WTC11 (cell line): ENCODE measurements at regions of chr19 and their contacts with region 1.

Region 1: GRCh38 chr19:41426952-41427646 is at the start of gene B3GNT8:
- DNase-seq: peak; percentile 89
- ATAC-seq: peak; percentile 89
- H3K4me3 Mint-ChIP-seq: peak within 1 kb of the TSS; percentile 84
- H3K27ac Mint-ChIP-seq: peak within 1 kb of the TSS; percentile 95
- H3K4me1 Mint-ChIP-seq: peaks cover 21% of the 10 kb centered on the region
- H3K27me3 Mint-ChIP-seq: no peaks in the 10 kb centered on the region
- CTCF ChIP-seq: no peak
- total RNA-seq, gene B3GNT8: 0.96 to 2.3 TPM (median 1.2 TPM) in 3 replicates

Region 2: GRCh38 chr19:41310033-41310758 is 116.9 kb before region 1 on chr19 and contains the start of gene CCDC97:
- CTCF ChIA-PET with region 1: no interaction called
- POLR2A ChIA-PET with region 1: no interaction called
- DNase-seq: peak; percentile 88
- ATAC-seq: peak; percentile 67
- H3K4me3 Mint-ChIP-seq: peak within 1 kb of the TSS; percentile 96
- H3K27ac Mint-ChIP-seq: peak within 1 kb of the TSS; percentile 98
- H3K4me1 Mint-ChIP-seq: peaks cover 21% of the 10 kb centered on the region
- H3K27me3 Mint-ChIP-seq: no peaks in the 10 kb centered on the region
- CTCF ChIP-seq: no peak
- total RNA-seq, gene CCDC97: 29.7 to 31.4 TPM (median 30.8 TPM) in 3 replicates

Region 3: DNA sequence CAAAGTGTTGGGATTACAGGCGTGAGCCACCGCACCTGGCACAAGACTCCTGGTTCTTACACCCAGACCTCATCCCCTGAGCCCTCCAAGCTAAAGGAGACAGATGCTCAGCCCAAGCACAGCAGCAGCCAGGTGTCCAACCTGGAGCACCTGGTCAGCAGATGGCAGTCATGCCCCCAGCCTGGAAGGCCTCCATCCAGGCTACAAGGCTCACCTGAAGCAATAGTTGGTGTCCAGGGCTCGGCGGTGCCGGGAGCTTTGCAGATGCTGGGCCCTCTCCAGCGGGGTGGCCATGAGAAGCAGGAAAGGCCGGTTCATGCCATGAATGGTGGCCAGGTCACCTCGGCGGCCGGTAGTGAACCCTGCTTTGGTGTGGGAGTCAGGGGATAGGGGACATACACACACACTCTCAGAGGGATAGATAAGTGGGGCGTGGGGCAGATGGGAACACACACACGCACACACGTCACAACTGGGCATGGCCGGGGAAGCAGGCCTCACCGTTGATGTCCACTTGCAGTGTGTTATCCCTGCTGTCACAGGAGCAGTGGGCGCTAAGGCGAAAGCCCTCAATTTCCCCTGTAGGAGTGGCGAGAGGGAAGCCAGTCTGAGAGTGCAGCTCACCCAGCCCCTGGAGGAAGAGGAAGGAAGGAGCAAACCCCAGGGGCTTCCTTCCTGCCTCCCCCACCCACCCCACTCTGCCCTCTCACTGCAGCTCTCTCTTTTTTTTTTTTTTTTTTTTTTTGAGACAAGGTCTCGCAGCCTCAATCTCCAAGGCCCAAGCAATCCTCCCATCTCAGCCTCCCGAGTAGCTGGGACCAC is 85.2 kb before region 1 on chr19:
- CTCF ChIA-PET with region 1: interaction called, 10 read pairs
- POLR2A ChIA-PET with region 1: no interaction called
- DNase-seq: peak; percentile 56
- ATAC-seq: peak; percentile 89
- H3K4me3 Mint-ChIP-seq: no peak overlapping the region
- H3K27ac Mint-ChIP-seq: no peak overlapping the region
- H3K4me1 Mint-ChIP-seq: no peaks in the 10 kb centered on the region
- H3K27me3 Mint-ChIP-seq: no peaks in the 10 kb centered on the region
- CTCF ChIP-seq: no peak

Region 4: GRCh38 chr19:41409288-41409687 is 17.8 kb before region 1 on chr19:
- CTCF ChIA-PET with region 1: interaction called, 25 read pairs
- POLR2A ChIA-PET with region 1: interaction called, 6 read pairs
- DNase-seq: no peak
- ATAC-seq: no peak
- H3K4me3 Mint-ChIP-seq: no peak overlapping the region
- H3K27ac Mint-ChIP-seq: peak overlapping the region; percentile 22; the same call in 1 of the 2 replicates
- H3K4me1 Mint-ChIP-seq: peaks cover 13% of the 10 kb centered on the region
- H3K27me3 Mint-ChIP-seq: no peaks in the 10 kb centered on the region
- CTCF ChIP-seq: no peak

Region 5: GRCh38 chr19:41439441-41440222 is 12.5 kb after region 1 on chr19 and contains the start of gene DMAC2:
- CTCF ChIA-PET with region 1: interaction called, 40 read pairs
- POLR2A ChIA-PET with region 1: interaction called, 31 read pairs
- DNase-seq: peak; percentile 97
- ATAC-seq: peak; percentile 98
- H3K4me3 Mint-ChIP-seq: no peak within 1 kb of the TSS
- H3K27ac Mint-ChIP-seq: no peak within 1 kb of the TSS
- H3K4me1 Mint-ChIP-seq: peaks cover 13% of the 10 kb centered on the region
- H3K27me3 Mint-ChIP-seq: peaks cover 17% of the 10 kb centered on the region; the same call in 1 of the 2 replicates
- CTCF ChIP-seq: no peak
- total RNA-seq, gene DMAC2: 77.6 to 85.6 TPM (median 82.6 TPM) in 3 replicates